Tibial artery (tissue), 4 donors: ENCODE measurements at regions of chr9 and their contacts with region 1.

Region 1: GRCh38 chr9:16133556-16134227 is 580.8 kb downstream of the CCDC171 start:
- DNase-seq: peak; percentile 30 to 74
- H3K4me3 ChIP-seq: no peak overlapping the region
- H3K27ac ChIP-seq: no peak overlapping the region
- H3K4me1 ChIP-seq: peaks cover 0 to 14% (median 4%) of the 10 kb centered on the region in 4 donors
- H3K27me3 ChIP-seq: no peaks in the 10 kb centered on the region
- CTCF ChIP-seq: peak; percentile 51 to 52

Region 2: GRCh38 chr9:15155826-15156225 is 977.9 kb before region 1 on chr9:
- intact Hi-C with region 1: no loop called
- DNase-seq: peak; percentile 74 to 81
- H3K4me3 ChIP-seq: no peak overlapping the region
- H3K27ac ChIP-seq: peak overlapping the region; percentile 77 to 80
- H3K4me1 ChIP-seq: peaks cover 0 to 84% (median 65%) of the 10 kb centered on the region in 4 donors
- H3K27me3 ChIP-seq: no peaks in the 10 kb centered on the region
- CTCF ChIP-seq: no peak

Region 3: GRCh38 chr9:15873569-15874177 is 260.0 kb before region 1 on chr9:
- intact Hi-C with region 1: loop called (anchors 10 kb)
- DNase-seq: no peak
- H3K4me3 ChIP-seq: no peak overlapping the region
- H3K27ac ChIP-seq: no peak overlapping the region
- H3K4me1 ChIP-seq: no peaks in the 10 kb centered on the region
- H3K27me3 ChIP-seq: no peaks in the 10 kb centered on the region
- CTCF ChIP-seq: peak; percentile 66 to 67

Region 4: DNA sequence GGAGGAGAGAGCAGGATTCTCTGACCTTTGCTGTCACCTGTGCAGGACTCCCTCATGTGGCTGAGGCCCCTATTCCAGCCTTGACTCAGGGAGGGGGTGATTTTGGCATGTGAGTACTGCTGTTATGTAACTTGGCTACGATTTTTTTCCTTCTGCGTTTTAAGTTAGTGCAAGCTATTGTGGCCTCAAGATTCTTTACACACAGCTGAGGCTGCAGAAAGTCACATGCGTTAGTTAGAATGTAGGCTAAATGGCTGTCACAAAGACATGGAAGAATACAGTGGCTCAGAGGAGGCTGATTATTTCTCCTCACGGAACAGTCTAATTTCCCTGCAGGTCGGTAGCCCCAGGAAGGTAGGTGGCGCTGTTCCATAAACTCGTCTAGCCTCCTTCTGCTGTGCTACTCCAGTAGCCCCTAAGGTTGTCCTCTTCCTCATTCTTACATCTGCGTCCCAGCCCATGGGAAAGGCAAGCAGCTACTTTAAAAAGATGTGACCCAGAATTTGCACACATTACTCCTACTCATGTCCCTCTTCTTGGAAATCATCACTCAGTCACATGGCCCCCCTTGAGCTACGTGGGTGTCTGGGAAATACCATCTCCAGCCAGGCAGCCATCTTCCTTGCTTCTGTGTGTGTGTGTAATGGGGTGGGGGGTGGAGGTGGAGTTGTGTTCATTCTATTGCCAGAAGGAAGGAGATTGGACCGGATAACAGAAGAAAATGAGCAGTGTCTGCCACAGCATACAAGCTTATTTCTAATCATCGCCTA is 94.3 kb before region 1 on chr9:
- intact Hi-C with region 1: loop called (anchors 5 kb)
- DNase-seq: no peak
- H3K4me3 ChIP-seq: no peak overlapping the region
- H3K27ac ChIP-seq: no peak overlapping the region
- H3K4me1 ChIP-seq: peaks cover 0 to 10% (median 7%) of the 10 kb centered on the region in 4 donors
- H3K27me3 ChIP-seq: no peaks in the 10 kb centered on the region
- CTCF ChIP-seq: peak in 1 of 2 experiments; percentile 5

Region 5: GRCh38 chr9:16290169-16290568 is 156.5 kb after region 1 on chr9:
- intact Hi-C with region 1: no loop called
- DNase-seq: no peak
- H3K4me3 ChIP-seq: no peak overlapping the region
- H3K27ac ChIP-seq: no peak overlapping the region
- H3K4me1 ChIP-seq: peaks cover 0 to 9% (median 4%) of the 10 kb centered on the region in 4 donors
- H3K27me3 ChIP-seq: no peaks in the 10 kb centered on the region
- CTCF ChIP-seq: no peak